WTC11 (cell line): ENCODE measurements at regions of chr19 and their contacts with region 1.

Region 1: DNA sequence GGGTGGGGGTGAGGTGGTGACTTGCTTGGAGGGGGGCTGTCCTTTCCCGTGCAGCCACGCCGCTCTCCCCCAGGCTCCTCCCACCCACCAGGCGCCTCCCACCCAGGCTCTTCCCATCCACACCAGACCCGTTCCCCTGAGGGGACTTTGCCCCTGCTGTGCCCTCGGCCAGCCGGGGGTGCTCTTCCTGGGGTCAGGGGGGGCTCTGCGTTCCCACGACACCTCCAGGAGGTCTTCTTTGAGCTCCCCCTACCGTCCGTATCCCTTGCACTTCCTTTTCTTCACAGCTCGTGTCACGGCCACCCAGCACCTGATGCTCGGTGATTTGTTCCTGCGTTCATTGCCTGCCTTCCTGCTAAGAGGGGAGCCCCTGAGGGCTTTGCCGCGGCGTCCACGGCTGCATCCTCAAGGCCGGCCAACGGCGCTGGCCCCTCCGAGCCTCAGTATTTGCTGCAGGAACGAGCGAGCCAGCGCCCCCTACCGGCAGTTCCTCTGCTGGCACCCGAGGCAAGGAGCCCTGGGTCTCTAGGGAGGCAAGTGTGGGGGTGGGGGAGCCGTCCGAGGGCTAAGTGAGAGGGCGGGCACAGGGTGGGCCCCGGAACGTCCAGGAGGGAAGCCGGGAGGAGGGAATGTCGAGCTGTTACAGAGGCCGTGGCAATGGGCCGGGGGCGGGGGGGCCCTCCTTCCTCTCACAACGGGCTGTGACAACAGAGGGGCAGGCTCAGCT is 11.8 kb downstream of the LRRC4B start:
- DNase-seq: peak; percentile 98
- ATAC-seq: peak; percentile 86
- H3K4me3 Mint-ChIP-seq: peak overlapping the region; percentile 99
- H3K27ac Mint-ChIP-seq: peak overlapping the region; percentile 88; the same call in 1 of the 2 replicates
- H3K4me1 Mint-ChIP-seq: peaks cover 12% of the 10 kb centered on the region
- H3K27me3 Mint-ChIP-seq: peaks cover 68% of the 10 kb centered on the region
- CTCF ChIP-seq: peak; percentile 97

Region 2: DNA sequence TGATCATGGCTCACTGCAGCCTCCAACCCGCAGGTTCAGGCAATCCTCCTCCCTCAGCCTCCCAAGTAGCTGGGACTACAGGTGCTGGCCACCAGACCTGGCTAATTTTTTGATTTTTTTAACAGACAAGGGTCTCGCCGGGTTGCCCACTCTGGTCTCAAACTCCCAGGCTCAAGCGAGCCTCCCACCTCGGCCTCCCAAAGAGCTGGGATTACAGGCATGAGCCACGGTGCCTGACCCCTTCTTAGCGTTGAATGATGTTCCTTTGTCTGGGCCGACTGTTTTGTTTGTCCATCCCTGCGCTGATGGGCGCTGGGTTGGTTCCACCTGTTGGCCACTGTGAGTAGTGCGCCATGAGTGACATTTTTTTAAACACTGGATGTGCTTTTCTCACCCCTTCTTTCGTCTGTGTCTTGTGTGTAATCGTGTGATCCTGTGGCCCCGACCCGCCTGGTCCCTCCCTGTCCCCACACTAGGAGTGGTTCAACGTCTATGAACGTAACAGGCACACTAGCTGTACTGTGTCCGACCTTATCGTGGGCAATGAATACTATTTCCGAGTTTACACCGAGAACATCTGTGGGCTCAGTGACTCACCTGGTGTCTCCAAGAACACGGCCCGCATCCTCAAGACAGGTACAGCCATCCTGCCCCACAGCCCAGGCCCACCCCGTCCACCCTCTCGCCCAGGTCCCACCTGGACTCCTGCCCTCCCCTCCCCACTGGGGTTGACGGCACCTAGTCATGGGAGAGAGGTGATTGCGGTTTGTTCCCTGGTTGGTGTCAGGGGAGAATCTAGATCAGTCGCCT is 95.2 kb before region 1 on chr19:
- CTCF ChIA-PET with region 1: interaction called, 21 read pairs
- POLR2A ChIA-PET with region 1: no interaction called
- DNase-seq: peak; percentile 77
- ATAC-seq: peak; percentile 72
- H3K4me3 Mint-ChIP-seq: no peak overlapping the region
- H3K27ac Mint-ChIP-seq: no peak overlapping the region
- H3K4me1 Mint-ChIP-seq: peaks cover 6% of the 10 kb centered on the region
- H3K27me3 Mint-ChIP-seq: no peaks in the 10 kb centered on the region; the same call in 1 of the 2 replicates
- CTCF ChIP-seq: peak; percentile 72

Region 3: GRCh38 chr19:50518091-50519005 is 38.1 kb before region 1 on chr19:
- CTCF ChIA-PET with region 1: interaction called, 30 read pairs
- POLR2A ChIA-PET with region 1: no interaction called
- DNase-seq: peak; percentile 73
- ATAC-seq: peak; percentile 72
- H3K4me3 Mint-ChIP-seq: no peak overlapping the region
- H3K27ac Mint-ChIP-seq: no peak overlapping the region
- H3K4me1 Mint-ChIP-seq: 0 out of 2 replicates have a peak, but pooled peaks cover 1% of the 10 kb centered on the region
- H3K27me3 Mint-ChIP-seq: peaks cover 21% of the 10 kb centered on the region
- CTCF ChIP-seq: peak; percentile 59

Region 4: DNA sequence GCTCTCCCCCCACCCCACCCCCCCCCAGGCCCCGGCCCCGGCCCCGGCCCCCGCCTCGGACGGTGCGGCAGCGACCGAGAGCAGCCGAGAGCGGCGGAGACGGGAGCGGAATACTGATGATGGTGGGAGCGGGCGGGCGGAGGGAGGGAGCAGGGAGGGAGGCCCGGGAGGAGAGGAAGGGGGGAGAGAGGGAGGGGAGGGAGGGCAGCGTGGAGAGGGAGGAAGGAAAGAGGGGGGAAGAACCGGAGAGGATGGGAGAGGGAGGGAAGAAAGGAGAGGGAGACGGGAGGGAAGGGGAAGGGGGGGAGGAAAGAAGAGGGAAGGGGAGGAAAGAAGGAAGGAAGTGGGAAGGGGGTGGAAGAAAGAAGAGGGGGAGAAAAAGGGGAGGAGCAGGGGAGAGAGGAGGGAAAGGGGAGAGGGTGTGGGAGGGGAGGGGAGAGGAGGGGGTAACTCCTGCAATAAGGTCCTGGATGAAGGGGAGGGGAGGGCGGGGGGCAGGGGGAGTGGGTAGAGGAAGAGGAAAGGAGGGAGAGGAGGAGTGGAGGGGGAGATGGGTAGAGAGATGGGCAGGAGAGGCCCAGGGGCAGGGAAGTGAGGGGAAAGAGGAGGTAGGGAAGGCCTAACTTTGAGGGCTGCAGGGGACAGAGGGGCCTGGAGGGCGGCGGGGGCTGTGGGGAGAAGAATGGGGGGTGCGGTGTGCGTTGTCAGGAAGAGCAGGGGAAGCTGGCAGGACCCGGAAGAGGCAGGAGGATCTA is 12.1 kb after region 1 on chr19 and contains the start of gene LRRC4B:
- CTCF ChIA-PET with region 1: interaction called, 56 read pairs
- POLR2A ChIA-PET with region 1: no interaction called
- DNase-seq: peak; percentile 67
- ATAC-seq: peak; percentile 10; the same call in 1 of the 2 replicates
- H3K4me3 Mint-ChIP-seq: peak within 1 kb of the TSS; percentile 66
- H3K27ac Mint-ChIP-seq: no peak within 1 kb of the TSS
- H3K4me1 Mint-ChIP-seq: peaks cover 38% of the 10 kb centered on the region
- H3K27me3 Mint-ChIP-seq: peaks cover 68% of the 10 kb centered on the region
- CTCF ChIP-seq: no peak
- total RNA-seq, gene LRRC4B: 10.0 to 11.0 TPM (median 10.9 TPM) in 3 replicates

Region 5: DNA sequence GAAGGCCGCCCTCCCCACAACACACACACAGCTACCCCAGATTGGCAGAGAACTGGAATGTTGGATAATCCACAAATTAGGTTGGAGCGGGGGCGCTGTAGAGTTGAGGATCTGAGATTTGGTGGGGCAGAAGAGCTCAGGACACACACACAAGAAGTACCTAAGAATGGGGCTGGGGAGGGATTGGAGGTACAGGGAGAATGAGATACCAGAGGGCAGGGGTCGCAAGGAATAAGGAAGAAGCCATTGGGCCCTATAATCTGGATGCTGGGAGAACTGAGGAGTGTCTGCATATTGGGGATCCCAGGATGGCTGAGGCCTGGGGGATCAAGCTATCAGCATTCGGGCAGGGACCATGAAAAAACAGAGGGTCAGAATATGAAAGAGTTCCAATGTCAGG is 71.7 kb after region 1 on chr19:
- CTCF ChIA-PET with region 1: interaction called, 14 read pairs
- POLR2A ChIA-PET with region 1: no interaction called
- DNase-seq: no peak
- ATAC-seq: no peak; the same call in 1 of the 2 replicates
- H3K4me3 Mint-ChIP-seq: no peak overlapping the region
- H3K27ac Mint-ChIP-seq: no peak overlapping the region
- H3K4me1 Mint-ChIP-seq: no peaks in the 10 kb centered on the region
- H3K27me3 Mint-ChIP-seq: peaks cover 4% of the 10 kb centered on the region
- CTCF ChIP-seq: no peak

Region 6: DNA sequence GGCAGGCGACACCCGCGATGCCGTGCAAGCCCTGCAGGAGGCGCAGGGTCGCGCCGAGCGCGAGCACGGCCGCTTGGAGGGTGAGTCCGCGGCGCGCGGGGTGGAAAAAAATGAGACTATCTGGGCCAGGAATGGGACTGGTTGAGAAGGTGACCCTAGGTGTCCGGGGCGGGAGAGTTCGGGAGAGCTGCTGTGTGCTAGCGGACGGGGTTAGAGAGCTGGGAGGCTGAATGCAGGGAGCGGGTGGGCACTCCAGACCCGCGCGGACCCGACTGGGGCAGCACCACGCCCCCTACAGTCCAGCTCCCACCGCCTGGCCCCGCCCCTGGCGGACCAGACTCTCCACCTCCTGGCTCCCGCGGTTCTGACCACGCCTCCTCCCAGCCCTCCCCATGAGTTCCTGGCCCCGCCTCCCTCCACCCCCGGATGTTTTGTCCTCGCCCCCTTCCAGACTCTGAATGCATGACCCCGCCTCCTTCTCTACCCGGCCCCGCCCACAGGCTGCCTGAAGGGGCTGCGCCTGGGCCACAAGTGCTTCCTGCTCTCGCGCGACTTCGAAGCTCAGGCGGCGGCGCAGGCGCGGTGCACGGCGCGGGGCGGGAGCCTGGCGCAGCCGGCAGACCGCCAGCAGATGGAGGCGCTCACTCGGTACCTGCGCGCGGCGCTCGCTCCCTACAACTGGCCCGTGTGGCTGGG is 168.2 kb after region 1 on chr19:
- CTCF ChIA-PET with region 1: interaction called, 15 read pairs
- POLR2A ChIA-PET with region 1: no interaction called
- DNase-seq: peak; percentile 100
- ATAC-seq: peak; percentile 74
- H3K4me3 Mint-ChIP-seq: peak overlapping the region; percentile 90
- H3K27ac Mint-ChIP-seq: peak overlapping the region; percentile 82
- H3K4me1 Mint-ChIP-seq: peaks cover 55% of the 10 kb centered on the region
- H3K27me3 Mint-ChIP-seq: peaks cover 43% of the 10 kb centered on the region
- CTCF ChIP-seq: peak; percentile 77